ENCODE measurements at regions of chr10 and their contacts with region 1.

Region 1: DNA sequence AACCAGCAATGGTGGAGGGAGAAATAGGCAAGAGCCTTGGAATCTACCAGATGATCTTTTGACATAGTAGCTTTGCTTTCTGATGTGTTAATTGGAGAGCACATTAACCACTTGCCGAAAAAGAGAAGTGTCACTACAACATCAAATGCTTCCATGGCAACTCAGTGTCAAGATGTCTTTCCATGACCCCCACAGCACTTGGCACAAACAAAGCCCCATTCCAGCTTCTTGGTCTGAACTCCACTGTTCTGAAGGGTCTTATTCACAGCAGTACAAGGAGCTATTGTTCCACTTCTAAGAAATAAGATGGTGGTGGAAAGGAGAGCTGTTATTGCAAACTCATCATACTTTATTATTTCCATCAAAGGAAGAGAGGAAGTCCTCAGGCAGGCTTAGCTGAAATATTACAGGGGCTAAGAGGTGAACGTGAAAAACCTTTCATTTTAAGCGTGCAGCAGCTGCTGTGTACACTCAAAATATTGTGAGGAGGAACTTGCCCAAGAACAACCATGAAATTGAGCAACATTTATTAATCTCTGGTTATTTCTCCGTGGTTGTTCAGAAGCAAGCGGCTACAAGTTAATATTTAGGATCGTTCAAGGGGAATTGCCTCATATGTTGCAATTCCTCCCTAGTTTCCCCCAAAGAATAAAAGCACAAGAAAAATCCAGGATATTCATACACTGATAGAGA is 354.8 kb upstream of the CELF2 start:
- DNase-seq: peak in 1 of 2 donors; percentile 19
- H3K4me3 ChIP-seq: peak overlapping the region in 1 of 3 donors; percentile 7
- H3K27ac ChIP-seq: peak overlapping the region in 1 of 2 donors; percentile 52
- H3K4me1 ChIP-seq: no peaks in the 10 kb centered on the region
- H3K27me3 ChIP-seq: no peaks in the 10 kb centered on the region
- CTCF ChIP-seq: no peak
- POLR2A ChIP-seq: no peak

Region 2: GRCh38 chr10:10629512-10629911 is 33.4 kb before region 1 on chr10:
- intact Hi-C with region 1: loop called (anchors 2 kb)
- DNase-seq: no peak
- H3K4me3 ChIP-seq: no peak overlapping the region
- H3K27ac ChIP-seq: no peak overlapping the region
- H3K4me1 ChIP-seq: no peaks in the 10 kb centered on the region
- H3K27me3 ChIP-seq: no peaks in the 10 kb centered on the region
- CTCF ChIP-seq: no peak
- POLR2A ChIP-seq: no peak

Region 3: DNA sequence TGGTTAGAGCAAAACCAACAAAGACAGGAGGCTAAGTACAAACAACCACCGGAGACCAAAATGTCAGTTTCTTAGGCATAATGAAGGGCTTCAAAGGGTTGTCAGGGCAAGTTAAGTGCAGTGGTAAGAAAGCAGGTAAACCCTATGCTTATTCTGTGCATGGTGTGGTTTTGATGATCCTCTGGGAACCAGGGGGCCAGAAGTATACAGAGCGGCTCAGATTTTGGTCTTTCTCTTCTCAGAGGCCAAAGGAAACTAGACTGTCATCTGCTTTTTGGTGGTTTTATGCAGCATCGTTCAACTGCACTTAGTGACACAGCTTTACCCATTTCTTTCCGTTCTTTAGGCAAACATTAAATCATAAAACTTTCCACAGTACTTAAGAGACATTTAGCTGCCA is 22.1 kb after region 1 on chr10:
- intact Hi-C with region 1: loop called (anchors 1 kb)
- DNase-seq: no peak
- H3K4me3 ChIP-seq: no peak overlapping the region
- H3K27ac ChIP-seq: no peak overlapping the region
- H3K4me1 ChIP-seq: no peaks in the 10 kb centered on the region
- H3K27me3 ChIP-seq: no peaks in the 10 kb centered on the region
- CTCF ChIP-seq: no peak
- POLR2A ChIP-seq: no peak

Region 4: GRCh38 chr10:10722422-10722821 is 59.6 kb after region 1 on chr10:
- intact Hi-C with region 1: no loop called
- DNase-seq: no peak
- H3K4me3 ChIP-seq: no peak overlapping the region
- H3K27ac ChIP-seq: no peak overlapping the region
- H3K4me1 ChIP-seq: no peaks in the 10 kb centered on the region
- H3K27me3 ChIP-seq: no peaks in the 10 kb centered on the region
- CTCF ChIP-seq: no peak
- POLR2A ChIP-seq: no peak